Right ventricle myocardium superior (tissue), 1 donor: ENCODE measurements at regions of chr1 and their contacts with region 1.

Region 1: DNA sequence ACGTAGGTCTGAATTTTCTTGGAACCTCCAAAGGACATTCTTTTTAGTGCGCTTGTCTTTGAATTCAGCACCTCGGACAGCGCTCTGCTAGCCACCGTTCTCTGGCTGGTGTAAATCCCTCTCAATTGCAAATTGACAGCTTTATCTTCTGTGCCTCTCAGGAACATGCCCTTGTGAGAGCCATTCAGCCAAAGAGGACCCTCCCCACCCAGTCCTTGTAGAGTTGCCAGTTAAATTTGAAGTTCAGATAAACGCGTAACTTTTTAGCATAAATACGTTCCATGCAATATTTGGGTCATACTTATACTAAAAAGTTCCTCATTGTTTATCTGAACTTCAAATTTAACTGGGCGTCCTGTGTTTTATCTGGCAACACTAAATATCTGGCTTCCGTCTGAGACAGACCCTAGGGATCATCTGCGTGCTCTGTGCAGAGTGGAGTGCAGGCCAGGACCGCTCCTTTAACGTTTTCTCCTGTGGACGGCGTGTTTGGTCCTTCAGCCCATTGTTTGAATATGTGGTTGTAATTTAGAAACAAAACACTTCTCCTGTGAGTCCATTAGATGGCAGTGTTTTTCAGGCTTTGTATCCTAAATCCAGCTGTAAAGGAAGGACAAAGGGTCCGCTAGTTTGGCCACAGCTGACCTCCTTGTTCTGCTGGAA is 7.0 kb downstream of the KCNAB2 start:
- DNase-seq: peak; percentile 63
- ATAC-seq: peak; percentile 69

Region 2: GRCh38 chr1:5740865-5741860 is 311.5 kb before region 1 on chr1:
- intact Hi-C with region 1: no loop called
- DNase-seq: peak; percentile 14
- ATAC-seq: no peak

Region 3: GRCh38 chr1:6171548-6172119 is 119.0 kb after region 1 on chr1:
- intact Hi-C with region 1: loop called (anchors 10 kb)
- DNase-seq: no peak
- ATAC-seq: peak; percentile 20

Region 4: GRCh38 chr1:6188466-6188865 is 135.8 kb after region 1 on chr1:
- intact Hi-C with region 1: no loop called
- DNase-seq: no peak
- ATAC-seq: no peak

Region 5: GRCh38 chr1:6245086-6245868 is 192.6 kb after region 1 on chr1:
- intact Hi-C with region 1: loop called (anchors 5 kb)
- DNase-seq: peak; percentile 88
- ATAC-seq: peak; percentile 83